SK-MEL-5 (cell line): ENCODE measurements at regions of chr9 and their contacts with region 1.

Region 1: GRCh38 chr9:72038890-72039410 is 21.5 kb downstream of the C9orf57 start:
- DNase-seq: peak; percentile 91

Region 2: GRCh38 chr9:71806901-71807307 is 232.0 kb before region 1 on chr9:
- in situ Hi-C with region 1: loop called (anchors 25 kb)
- DNase-seq: peak; percentile 93

Region 3: DNA sequence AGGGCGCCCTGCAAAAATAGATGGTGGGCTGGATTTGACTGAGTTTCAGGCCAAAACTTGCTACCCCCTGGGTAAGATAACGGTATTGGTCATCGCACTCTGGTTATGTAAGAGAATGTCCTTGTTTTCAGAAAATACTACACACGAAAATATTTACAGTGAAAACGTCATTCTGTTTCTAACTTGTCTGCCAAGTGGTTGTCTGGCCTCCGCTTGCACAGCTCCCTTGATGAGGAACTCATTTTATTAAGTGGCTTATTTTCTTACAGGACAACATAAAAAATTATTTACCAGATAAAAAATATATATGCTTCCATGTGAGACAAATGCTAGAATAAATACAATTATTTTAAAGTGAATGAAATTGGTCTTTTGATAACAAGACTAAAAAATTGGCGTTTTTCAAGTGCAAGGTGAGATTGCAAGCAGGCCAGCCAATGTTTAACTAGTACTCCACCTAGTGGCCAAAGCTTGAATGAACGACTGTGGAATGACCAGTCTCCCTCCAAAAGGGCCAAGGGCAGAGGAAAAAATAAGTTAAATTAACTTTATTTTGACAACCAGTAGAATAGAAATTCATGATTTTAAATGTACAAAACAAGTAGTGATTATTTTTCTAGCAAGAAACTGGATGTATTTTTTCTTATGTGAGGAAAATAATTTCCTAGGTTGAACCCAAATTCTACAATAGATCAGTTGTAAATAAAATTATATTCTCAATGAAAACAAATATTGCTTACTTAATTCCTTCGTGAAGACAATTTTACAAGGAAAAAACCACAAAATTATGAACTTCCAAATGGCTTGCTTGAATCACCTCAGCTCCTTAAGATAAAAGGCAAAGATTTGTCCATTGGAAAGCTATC is 232.9 kb after region 1 on chr9:
- in situ Hi-C with region 1: loop called (anchors 10 kb)
- DNase-seq: peak; percentile 77